ENCODE measurements at regions of chr2 and their contacts with region 1.

Region 1: DNA sequence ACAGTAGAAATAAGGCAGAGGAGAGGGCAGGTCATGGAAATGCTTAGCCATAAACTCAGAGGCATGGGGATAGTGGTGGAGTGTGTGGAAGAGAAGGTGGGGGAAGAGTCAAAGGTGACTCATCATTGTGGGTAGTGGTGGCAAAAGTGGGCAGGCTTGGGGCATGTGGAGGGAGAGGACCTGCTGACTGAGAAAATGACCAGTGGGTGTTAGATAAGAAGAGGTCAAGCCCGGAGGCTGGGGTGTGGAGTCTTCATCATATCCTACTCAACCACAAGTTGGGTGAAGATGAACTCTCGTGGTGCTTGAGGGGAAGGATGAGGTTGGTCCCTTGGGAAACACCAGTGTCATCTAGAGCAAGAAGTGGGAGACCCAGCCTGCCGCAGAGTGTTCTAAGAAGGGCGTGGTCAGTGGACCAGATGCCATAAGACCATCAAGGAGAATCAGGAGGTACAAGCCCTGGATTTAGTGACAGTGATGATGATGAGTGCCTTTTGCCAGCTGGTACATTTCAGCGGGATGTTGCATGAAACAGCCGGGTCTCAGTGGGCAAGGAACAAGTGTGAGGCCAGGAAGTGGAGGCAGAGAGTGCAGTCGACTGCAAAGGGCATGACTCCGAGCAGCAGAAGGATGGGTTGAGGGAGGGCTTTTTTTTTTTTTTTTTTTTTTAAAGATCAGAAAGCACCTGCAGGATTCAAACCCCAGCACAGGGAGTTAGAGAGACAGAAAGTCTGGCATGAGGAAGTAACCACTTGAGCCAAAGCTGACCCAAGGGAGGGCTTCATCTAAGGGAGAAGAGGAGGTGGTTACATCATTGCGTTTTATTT is 122.6 kb upstream of the SPRED2 start:
- DNase-seq: peak; percentile 39
- ATAC-seq: peak; percentile 45
- H3K4me3 ChIP-seq: no peak overlapping the region
- H3K27ac ChIP-seq: no peak overlapping the region
- H3K4me1 ChIP-seq: peaks cover 5% of the 10 kb centered on the region
- H3K27me3 ChIP-seq: no peaks in the 10 kb centered on the region
- CTCF ChIP-seq: no peak

Region 2: GRCh38 chr2:65544895-65545294 is 10.1 kb before region 1 on chr2:
- CTCF ChIA-PET with region 1: interaction called, 4 read pairs
- POLR2A ChIA-PET with region 1: interaction called, 10 read pairs
- intact Hi-C with region 1: no loop called
- DNase-seq: no peak
- ATAC-seq: no peak
- H3K4me3 ChIP-seq: no peak overlapping the region
- H3K27ac ChIP-seq: no peak overlapping the region
- H3K4me1 ChIP-seq: peaks cover 10% of the 10 kb centered on the region
- H3K27me3 ChIP-seq: no peaks in the 10 kb centered on the region
- CTCF ChIP-seq: no peak

Measured in PC-3 (cell line).